HCT116 (cell line): ENCODE measurements at regions of chr5 and their contacts with region 1.

Region 1: DNA sequence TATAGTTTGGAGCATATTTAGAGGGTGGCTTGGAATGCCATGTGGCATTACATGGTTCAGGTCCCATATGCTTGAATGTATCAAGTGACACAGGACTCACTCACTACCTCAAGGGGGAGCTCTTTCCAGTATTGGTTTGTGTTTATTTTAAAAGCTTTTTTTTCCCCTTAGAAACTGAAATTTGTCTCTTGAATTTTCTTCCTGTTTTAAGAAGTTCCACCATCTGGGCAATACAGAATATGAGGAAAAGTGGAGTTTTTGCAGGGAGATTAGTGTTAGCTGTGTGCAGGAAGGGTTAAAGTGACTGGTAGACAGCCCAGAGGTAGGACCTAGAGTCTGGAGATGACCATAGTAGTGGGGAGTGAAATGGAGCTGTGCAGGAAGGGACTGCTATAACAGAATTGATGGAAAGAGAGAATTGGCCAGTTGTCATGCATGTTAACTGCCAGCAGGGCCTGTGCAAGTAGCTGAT is 36.6 kb downstream of the CTNNA1 start:
- DNase-seq: peak; percentile 37
- ATAC-seq: peak; percentile 94
- H3K4me3 ChIP-seq: no peak overlapping the region
- H3K27ac ChIP-seq: no peak overlapping the region
- H3K4me1 ChIP-seq: no peaks in the 10 kb centered on the region; a peak in 1 of 4 replicates
- H3K27me3 ChIP-seq: no peaks in the 10 kb centered on the region
- CTCF ChIP-seq: peak; percentile 30 to 72 (median 71); a peak in 5 of 6 replicates
- POLR2A ChIP-seq: no peak
- RAD21 ChIP-seq: peak; percentile 44

Region 2: GRCh38 chr5:138762110-138762509 is 27.7 kb before region 1 on chr5:
- CTCF ChIA-PET with region 1: interaction called, 10 read pairs
- POLR2A ChIA-PET with region 1: interaction called, 3 read pairs
- RAD21 ChIA-PET with region 1: interaction called in 1 of 2 experiments, 3 read pairs
- intact Hi-C with region 1: no loop called
- DNase-seq: no peak
- ATAC-seq: no peak
- H3K4me3 ChIP-seq: no peak overlapping the region
- H3K27ac ChIP-seq: no peak overlapping the region
- H3K4me1 ChIP-seq: no peaks in the 10 kb centered on the region; a peak in 1 of 4 replicates
- H3K27me3 ChIP-seq: no peaks in the 10 kb centered on the region
- CTCF ChIP-seq: no peak
- POLR2A ChIP-seq: no peak
- RAD21 ChIP-seq: no peak

Region 3: GRCh38 chr5:138772986-138773594 is 16.7 kb before region 1 on chr5:
- CTCF ChIA-PET with region 1: interaction called, 13 read pairs
- POLR2A ChIA-PET with region 1: no interaction called
- RAD21 ChIA-PET with region 1: no interaction called
- intact Hi-C with region 1: no loop called
- DNase-seq: no peak
- ATAC-seq: no peak
- H3K4me3 ChIP-seq: no peak overlapping the region
- H3K27ac ChIP-seq: no peak overlapping the region
- H3K4me1 ChIP-seq: no peaks in the 10 kb centered on the region
- H3K27me3 ChIP-seq: no peaks in the 10 kb centered on the region
- CTCF ChIP-seq: no peak
- POLR2A ChIP-seq: no peak
- RAD21 ChIP-seq: no peak

Region 4: DNA sequence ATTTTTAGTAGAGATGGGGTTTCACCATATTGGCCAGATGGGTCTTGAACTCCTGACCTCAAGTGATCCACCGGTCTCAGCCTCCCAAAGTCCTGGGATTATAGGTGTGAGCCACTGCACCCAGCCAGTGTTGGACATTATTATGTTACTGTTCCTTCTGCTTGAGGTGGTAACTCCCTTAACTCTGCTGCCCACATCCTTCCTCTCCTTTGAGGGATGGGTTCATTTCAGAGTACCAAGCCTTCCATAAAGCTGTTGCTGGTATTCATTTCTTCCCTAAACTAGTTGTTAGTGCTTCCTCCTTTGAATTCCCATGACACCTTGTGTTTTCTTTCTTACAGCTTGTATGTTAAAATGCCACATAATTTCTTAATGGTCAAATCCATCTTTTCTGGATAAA is 17.4 kb after region 1 on chr5:
- CTCF ChIA-PET with region 1: interaction called, 23 read pairs
- POLR2A ChIA-PET with region 1: interaction called, 3 read pairs
- RAD21 ChIA-PET with region 1: no interaction called
- intact Hi-C with region 1: no loop called
- DNase-seq: no peak
- ATAC-seq: no peak
- H3K4me3 ChIP-seq: no peak overlapping the region
- H3K27ac ChIP-seq: no peak overlapping the region
- H3K4me1 ChIP-seq: no peaks in the 10 kb centered on the region
- H3K27me3 ChIP-seq: no peaks in the 10 kb centered on the region
- CTCF ChIP-seq: no peak
- POLR2A ChIP-seq: no peak
- RAD21 ChIP-seq: no peak

Region 5: GRCh38 chr5:138824924-138825863 is 35.4 kb after region 1 on chr5:
- CTCF ChIA-PET with region 1: interaction called, 10 read pairs
- POLR2A ChIA-PET with region 1: no interaction called
- RAD21 ChIA-PET with region 1: no interaction called
- intact Hi-C with region 1: no loop called
- DNase-seq: no peak
- ATAC-seq: peak; percentile 78
- H3K4me3 ChIP-seq: no peak overlapping the region
- H3K27ac ChIP-seq: no peak overlapping the region
- H3K4me1 ChIP-seq: no peaks in the 10 kb centered on the region
- H3K27me3 ChIP-seq: no peaks in the 10 kb centered on the region
- CTCF ChIP-seq: peak in 2 of 3 experiments; percentile 54 to 64; a peak in 5 of 6 replicates
- POLR2A ChIP-seq: no peak
- RAD21 ChIP-seq: 0 out of 2 replicates have a peak, but pooled peaks have one; percentile 31

Region 6: GRCh38 chr5:139004374-139005307 is 214.8 kb after region 1 on chr5:
- CTCF ChIA-PET with region 1: no interaction called
- POLR2A ChIA-PET with region 1: no interaction called
- RAD21 ChIA-PET with region 1: no interaction called
- intact Hi-C with region 1: no loop called
- DNase-seq: no peak
- ATAC-seq: no peak
- H3K4me3 ChIP-seq: no peak overlapping the region
- H3K27ac ChIP-seq: no peak overlapping the region
- H3K4me1 ChIP-seq: no peaks in the 10 kb centered on the region
- H3K27me3 ChIP-seq: no peaks in the 10 kb centered on the region
- CTCF ChIP-seq: no peak
- POLR2A ChIP-seq: no peak
- RAD21 ChIP-seq: no peak